Transverse colon (tissue), 4 donors: ENCODE measurements at regions of chr11 and their contacts with region 1.

Region 1: DNA sequence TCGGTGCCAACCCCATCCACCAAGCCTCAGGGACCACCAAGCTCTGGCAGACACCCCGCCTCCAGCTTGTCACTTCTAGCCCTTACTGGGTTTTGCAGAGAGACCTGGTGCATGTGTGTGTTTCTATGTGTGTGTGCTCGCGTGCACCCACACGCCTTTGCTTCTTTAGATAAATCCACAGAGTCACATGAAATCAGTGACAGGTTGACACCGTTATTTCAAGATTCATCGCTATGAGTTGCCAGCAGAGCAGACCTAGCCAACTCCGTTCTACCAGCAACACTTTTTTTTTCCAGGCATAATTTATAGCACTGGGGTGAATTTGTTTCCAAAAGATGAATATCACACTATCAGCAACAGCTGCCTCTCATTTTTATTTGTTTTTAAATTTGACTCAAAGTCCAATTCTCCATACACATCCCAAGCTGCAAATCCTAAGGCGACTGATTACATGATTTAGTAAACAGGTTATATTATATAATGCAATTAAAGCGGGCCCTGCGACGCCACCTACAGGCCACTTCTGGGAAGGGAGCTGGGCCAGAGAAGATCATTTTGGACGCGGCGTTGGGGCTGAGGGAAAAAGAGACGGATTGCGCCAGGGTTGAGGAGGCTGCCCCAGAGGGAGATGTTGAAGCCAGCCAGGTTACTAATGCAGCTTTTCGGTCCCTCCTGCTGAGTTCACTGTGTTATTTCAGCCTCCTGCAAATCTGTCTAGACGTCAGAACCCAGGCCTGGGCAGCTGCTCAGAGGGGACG is 150.5 kb downstream of the FEZ1 start:
- DNase-seq: peak; percentile 66
- H3K4me3 ChIP-seq: no peak overlapping the region
- H3K27ac ChIP-seq: peak overlapping the region in 2 of 4 donors; percentile 44 to 73
- H3K4me1 ChIP-seq: peaks cover 0 to 11% (median 3%) of the 10 kb centered on the region in 4 donors
- H3K27me3 ChIP-seq: peaks cover 3% of the 10 kb centered on the region
- CTCF ChIP-seq: peak; percentile 66 to 84 (median 80)
- EP300 ChIP-seq: no peak
- POLR2A ChIP-seq: no peak

Region 2: GRCh38 chr11:125053167-125053566 is 292.4 kb before region 1 on chr11:
- in situ Hi-C with region 1: no loop called
- intact Hi-C with region 1: no loop called
- DNase-seq: no peak
- H3K4me3 ChIP-seq: no peak overlapping the region
- H3K27ac ChIP-seq: no peak overlapping the region
- H3K4me1 ChIP-seq: no peaks in the 10 kb centered on the region
- H3K27me3 ChIP-seq: no peaks in the 10 kb centered on the region
- CTCF ChIP-seq: no peak
- EP300 ChIP-seq: no peak
- POLR2A ChIP-seq: no peak

Region 3: GRCh38 chr11:125164422-125165110 is 181.0 kb before region 1 on chr11 and contains the start of gene PKNOX2:
- in situ Hi-C with region 1: loop called in 3 of 4 experiments (anchors 10 to 25 kb)
- intact Hi-C with region 1: loop called (anchors 2 kb)
- DNase-seq: peak; percentile 50
- H3K4me3 ChIP-seq: peak within 1 kb of the TSS; percentile 50 to 67 (median 58)
- H3K27ac ChIP-seq: peak within 1 kb of the TSS; percentile 72 to 91 (median 84)
- H3K4me1 ChIP-seq: peaks cover 4 to 51% (median 16%) of the 10 kb centered on the region in 4 donors
- H3K27me3 ChIP-seq: peaks cover 65% of the 10 kb centered on the region
- CTCF ChIP-seq: peak in 4 of 5 experiments; percentile 7 to 67 (median 55)
- EP300 ChIP-seq: no peak
- POLR2A ChIP-seq: peak; percentile 45
- total RNA-seq, gene PKNOX2: 0.27 to 4.8 (median 0.75) TPM in 3 of 4 donors, not detected in the other

Region 4: DNA sequence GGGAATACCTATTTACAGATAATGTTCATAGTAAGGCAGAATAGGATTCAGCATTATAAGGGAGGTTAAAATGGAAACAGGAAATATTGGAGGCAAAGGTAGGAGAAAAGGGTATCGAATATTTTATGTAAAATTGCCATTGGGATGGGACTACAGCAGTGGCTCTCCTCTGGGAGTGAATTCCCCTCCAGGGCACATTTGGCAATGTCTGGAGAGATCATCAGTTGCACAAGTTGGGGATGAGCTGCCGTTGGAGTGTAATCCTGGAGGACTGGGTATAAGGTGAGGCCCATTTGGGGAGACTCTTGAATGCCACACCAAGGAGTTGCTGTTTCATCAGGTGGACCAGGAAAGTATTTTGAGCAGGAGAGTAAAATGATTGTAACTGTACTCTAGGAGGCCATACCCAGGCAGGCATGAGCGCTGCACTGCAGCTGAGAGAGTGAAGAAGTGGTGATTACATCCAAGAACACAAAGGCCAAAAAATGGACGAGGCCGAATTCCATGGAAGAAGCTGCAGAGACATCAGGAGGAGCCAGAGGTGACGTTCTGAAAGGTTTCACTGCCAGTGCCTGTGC is 343.8 kb after region 1 on chr11:
- in situ Hi-C with region 1: no loop called
- intact Hi-C with region 1: no loop called
- DNase-seq: no peak
- H3K4me3 ChIP-seq: no peak overlapping the region
- H3K27ac ChIP-seq: no peak overlapping the region
- H3K4me1 ChIP-seq: no peaks in the 10 kb centered on the region
- H3K27me3 ChIP-seq: no peaks in the 10 kb centered on the region
- CTCF ChIP-seq: no peak
- EP300 ChIP-seq: no peak
- POLR2A ChIP-seq: no peak

Region 5: DNA sequence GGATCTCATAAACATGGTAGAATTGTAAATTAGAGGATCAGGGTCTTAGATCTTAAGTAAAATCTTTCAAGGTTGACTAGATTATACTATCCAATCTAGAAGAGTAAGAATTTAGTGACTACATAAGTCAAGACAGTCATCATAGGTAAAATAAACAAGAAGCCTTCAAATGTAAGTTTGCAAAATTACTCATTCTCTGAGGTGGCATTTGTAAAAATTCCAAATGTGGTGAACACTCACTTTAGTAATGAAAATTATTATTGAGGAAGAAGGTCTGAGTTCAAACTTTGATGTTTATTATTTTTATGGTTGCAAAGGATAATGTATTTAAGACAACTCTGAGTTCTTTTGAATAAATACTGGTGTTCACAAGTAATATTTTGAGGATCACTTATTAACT is 546.5 kb after region 1 on chr11:
- in situ Hi-C with region 1: no loop called
- intact Hi-C with region 1: no loop called
- DNase-seq: no peak
- H3K4me3 ChIP-seq: no peak overlapping the region
- H3K27ac ChIP-seq: no peak overlapping the region
- H3K4me1 ChIP-seq: peaks cover 0 to 19% (median 9%) of the 10 kb centered on the region in 4 donors
- H3K27me3 ChIP-seq: no peaks in the 10 kb centered on the region
- CTCF ChIP-seq: no peak
- EP300 ChIP-seq: no peak
- POLR2A ChIP-seq: no peak